Breast epithelium (tissue), 4 donors: ENCODE measurements at regions of chr5 and their contacts with region 1.

Region 1: DNA sequence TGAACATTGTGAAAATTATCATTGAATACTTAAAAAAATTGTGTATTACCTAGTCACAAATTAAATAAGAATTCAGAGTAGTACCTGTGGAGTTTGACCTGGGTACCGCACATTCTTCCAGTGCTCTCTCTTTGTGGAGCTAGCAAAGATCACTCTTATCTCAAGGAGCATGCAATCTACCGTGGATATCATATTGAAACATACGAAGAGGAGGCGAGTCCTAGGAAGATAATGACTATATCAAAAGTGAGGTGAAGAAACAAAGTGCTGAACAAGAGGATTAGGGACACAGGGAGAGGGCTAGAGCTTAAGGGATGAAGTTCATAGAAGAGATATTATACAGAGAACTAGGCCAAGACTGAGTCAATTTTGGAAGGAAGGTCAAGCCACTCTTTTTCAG is 55.9 kb upstream of the NR3C1 start:
- DNase-seq: no peak
- H3K4me3 ChIP-seq: no peak overlapping the region
- H3K27ac ChIP-seq: no peak overlapping the region
- H3K4me1 ChIP-seq: no peaks in the 10 kb centered on the region
- H3K27me3 ChIP-seq: no peaks in the 10 kb centered on the region
- CTCF ChIP-seq: no peak
- POLR2A ChIP-seq: no peak

Region 2: GRCh38 chr5:143403593-143404415 is 55.6 kb before region 1 on chr5 and contains the start of gene NR3C1:
- intact Hi-C with region 1: loop called (anchors 2 kb)
- DNase-seq: peak; percentile 74 to 81
- H3K4me3 ChIP-seq: peak within 1 kb of the TSS; percentile 90 to 92 (median 91)
- H3K27ac ChIP-seq: peak within 1 kb of the TSS; percentile 96 to 99
- H3K4me1 ChIP-seq: no peaks in the 10 kb centered on the region
- H3K27me3 ChIP-seq: no peaks in the 10 kb centered on the region
- CTCF ChIP-seq: peak in 1 of 3 donors; percentile 58
- POLR2A ChIP-seq: no peak
- total RNA-seq, gene NR3C1: 51.1 to 122 (median 69.7) TPM

Region 3: DNA sequence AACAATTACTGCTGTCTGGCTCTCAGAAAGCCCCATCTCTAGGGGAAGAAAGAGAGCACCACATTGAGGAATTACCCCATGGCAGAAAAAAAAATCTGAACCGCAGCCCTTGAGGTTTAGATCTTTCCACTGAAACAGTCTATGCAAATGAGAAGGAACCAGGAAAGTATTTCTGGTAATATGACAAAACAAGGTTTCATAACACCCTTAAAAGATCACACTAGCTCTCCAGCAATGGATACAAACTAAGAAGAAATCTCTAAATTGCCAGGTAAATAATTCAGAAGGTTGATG is 1948.6 kb after region 1 on chr5:
- intact Hi-C with region 1: no loop called
- DNase-seq: no peak
- H3K4me3 ChIP-seq: no peak overlapping the region
- H3K27ac ChIP-seq: no peak overlapping the region
- H3K4me1 ChIP-seq: no peaks in the 10 kb centered on the region
- H3K27me3 ChIP-seq: no peaks in the 10 kb centered on the region
- CTCF ChIP-seq: no peak
- POLR2A ChIP-seq: no peak